ENCODE measurements at regions of chr1 and their contacts with region 1.

Region 1: GRCh38 chr1:235105051-235106043 is 23.3 kb downstream of the TOMM20 start:
- DNase-seq: peak in 1 of 5 donors; percentile 39
- H3K4me3 ChIP-seq: peak overlapping the region; percentile 59
- H3K4me3 Mint-ChIP-seq: peak overlapping the region; percentile 84 to 93 (median 87)
- H3K27ac ChIP-seq: peak overlapping the region; percentile 26
- H3K27ac Mint-ChIP-seq: peak overlapping the region; percentile 69 to 95 (median 89)
- H3K4me1 ChIP-seq: peaks cover 24% of the 10 kb centered on the region
- H3K4me1 Mint-ChIP-seq: peaks cover 27 to 46% (median 34%) of the 10 kb centered on the region in 3 donors
- H3K27me3 ChIP-seq: no peaks in the 10 kb centered on the region
- H3K27me3 Mint-ChIP-seq: peaks cover 0 to 1% of the 10 kb centered on the region in 2 donors

Region 2: GRCh38 chr1:234955107-234955731 is 150.1 kb before region 1 on chr1:
- CTCF ChIA-PET with region 1: no interaction called
- POLR2A ChIA-PET with region 1: no interaction called
- DNase-seq: no peak
- H3K4me3 ChIP-seq: no peak overlapping the region
- H3K4me3 Mint-ChIP-seq: peak overlapping the region in 6 of 7 donors; percentile 17 to 77 (median 44)
- H3K27ac ChIP-seq: peak overlapping the region; percentile 3
- H3K27ac Mint-ChIP-seq: peak overlapping the region; percentile 15 to 90 (median 80)
- H3K4me1 ChIP-seq: peaks cover 26% of the 10 kb centered on the region
- H3K4me1 Mint-ChIP-seq: peaks cover 31 to 37% (median 34%) of the 10 kb centered on the region in 3 donors
- H3K27me3 ChIP-seq: no peaks in the 10 kb centered on the region
- H3K27me3 Mint-ChIP-seq: no peaks in the 10 kb centered on the region

Region 3: GRCh38 chr1:235093696-235094592 is 11.4 kb before region 1 on chr1:
- CTCF ChIA-PET with region 1: interaction called, 11 read pairs
- POLR2A ChIA-PET with region 1: no interaction called
- DNase-seq: peak; percentile 67 to 84 (median 75)
- H3K4me3 ChIP-seq: no peak overlapping the region
- H3K4me3 Mint-ChIP-seq: no peak overlapping the region
- H3K27ac ChIP-seq: no peak overlapping the region
- H3K27ac Mint-ChIP-seq: peak overlapping the region in 2 of 8 donors; percentile 0 to 9
- H3K4me1 ChIP-seq: no peaks in the 10 kb centered on the region
- H3K4me1 Mint-ChIP-seq: peaks cover 5 to 10% (median 7%) of the 10 kb centered on the region in 3 donors
- H3K27me3 ChIP-seq: no peaks in the 10 kb centered on the region
- H3K27me3 Mint-ChIP-seq: peaks cover 2 to 9% of the 10 kb centered on the region in 2 donors

Region 4: GRCh38 chr1:235127732-235128455 is 22.5 kb after region 1 on chr1:
- CTCF ChIA-PET with region 1: interaction called, 10 read pairs
- POLR2A ChIA-PET with region 1: interaction called, 7 read pairs
- DNase-seq: peak in 1 of 5 donors; percentile 5
- H3K4me3 ChIP-seq: peak overlapping the region; percentile 98
- H3K4me3 Mint-ChIP-seq: peak overlapping the region; percentile 93 to 99 (median 97)
- H3K27ac ChIP-seq: peak overlapping the region; percentile 89
- H3K27ac Mint-ChIP-seq: peak overlapping the region; percentile 94 to 99 (median 98)
- H3K4me1 ChIP-seq: peaks cover 48% of the 10 kb centered on the region
- H3K4me1 Mint-ChIP-seq: peaks cover 45 to 56% (median 53%) of the 10 kb centered on the region in 3 donors
- H3K27me3 ChIP-seq: no peaks in the 10 kb centered on the region
- H3K27me3 Mint-ChIP-seq: no peaks in the 10 kb centered on the region

Region 5: DNA sequence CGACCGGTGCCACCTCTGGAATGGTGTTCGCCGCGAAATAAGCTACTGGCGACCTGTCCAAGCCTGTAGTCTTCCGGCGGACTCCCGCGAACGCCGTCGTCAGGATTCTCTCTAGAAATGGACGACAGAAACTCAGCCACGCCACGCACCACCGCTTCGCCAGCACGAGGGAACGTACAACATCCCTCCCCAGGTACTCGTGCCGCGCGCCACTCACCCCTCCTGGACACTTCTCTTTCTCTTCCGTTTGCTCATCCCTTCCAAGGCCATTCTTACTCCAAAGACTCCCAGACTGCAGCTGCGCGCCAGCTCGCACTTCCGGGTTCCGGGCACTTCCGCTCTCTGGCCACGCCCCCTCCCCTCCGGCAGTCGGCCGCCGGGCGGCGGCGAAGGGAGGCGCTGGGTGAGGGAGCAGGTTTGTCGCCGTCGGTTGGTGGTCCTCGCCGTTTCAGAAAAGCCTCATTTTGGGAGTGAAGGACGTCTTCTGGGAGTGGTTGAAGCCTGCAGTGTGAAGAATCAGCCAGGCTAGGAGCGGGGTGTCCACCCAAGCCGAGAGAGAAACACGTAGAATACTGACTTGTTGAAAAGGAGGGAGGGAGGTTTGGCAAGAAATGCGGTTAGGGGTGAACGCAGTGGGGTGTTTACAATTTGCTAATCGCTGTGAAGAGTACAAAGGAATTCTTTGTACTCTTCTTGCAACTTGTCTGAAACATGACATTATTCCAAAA is 55.8 kb after region 1 on chr1 and contains the start of gene RBM34:
- CTCF ChIA-PET with region 1: no interaction called
- POLR2A ChIA-PET with region 1: interaction called, 12 read pairs
- DNase-seq: peak; percentile 90 to 95 (median 92)
- H3K4me3 ChIP-seq: peak within 1 kb of the TSS; percentile 91
- H3K4me3 Mint-ChIP-seq: peak within 1 kb of the TSS; percentile 95 to 98 (median 96)
- H3K27ac ChIP-seq: peak within 1 kb of the TSS; percentile 94
- H3K27ac Mint-ChIP-seq: peak within 1 kb of the TSS; percentile 94 to 99 (median 98)
- H3K4me1 ChIP-seq: peaks cover 45% of the 10 kb centered on the region
- H3K4me1 Mint-ChIP-seq: peaks cover 26 to 28% (median 26%) of the 10 kb centered on the region in 3 donors
- H3K27me3 ChIP-seq: no peaks in the 10 kb centered on the region
- H3K27me3 Mint-ChIP-seq: no peaks in the 10 kb centered on the region
- total RNA-seq, gene RBM34: 121 to 130 TPM

Measured in CD8-positive, alpha-beta memory T cell (primary cell).